GM12878 (cell line): ENCODE measurements at regions of chr7 and their contacts with region 1.

Region 1: DNA sequence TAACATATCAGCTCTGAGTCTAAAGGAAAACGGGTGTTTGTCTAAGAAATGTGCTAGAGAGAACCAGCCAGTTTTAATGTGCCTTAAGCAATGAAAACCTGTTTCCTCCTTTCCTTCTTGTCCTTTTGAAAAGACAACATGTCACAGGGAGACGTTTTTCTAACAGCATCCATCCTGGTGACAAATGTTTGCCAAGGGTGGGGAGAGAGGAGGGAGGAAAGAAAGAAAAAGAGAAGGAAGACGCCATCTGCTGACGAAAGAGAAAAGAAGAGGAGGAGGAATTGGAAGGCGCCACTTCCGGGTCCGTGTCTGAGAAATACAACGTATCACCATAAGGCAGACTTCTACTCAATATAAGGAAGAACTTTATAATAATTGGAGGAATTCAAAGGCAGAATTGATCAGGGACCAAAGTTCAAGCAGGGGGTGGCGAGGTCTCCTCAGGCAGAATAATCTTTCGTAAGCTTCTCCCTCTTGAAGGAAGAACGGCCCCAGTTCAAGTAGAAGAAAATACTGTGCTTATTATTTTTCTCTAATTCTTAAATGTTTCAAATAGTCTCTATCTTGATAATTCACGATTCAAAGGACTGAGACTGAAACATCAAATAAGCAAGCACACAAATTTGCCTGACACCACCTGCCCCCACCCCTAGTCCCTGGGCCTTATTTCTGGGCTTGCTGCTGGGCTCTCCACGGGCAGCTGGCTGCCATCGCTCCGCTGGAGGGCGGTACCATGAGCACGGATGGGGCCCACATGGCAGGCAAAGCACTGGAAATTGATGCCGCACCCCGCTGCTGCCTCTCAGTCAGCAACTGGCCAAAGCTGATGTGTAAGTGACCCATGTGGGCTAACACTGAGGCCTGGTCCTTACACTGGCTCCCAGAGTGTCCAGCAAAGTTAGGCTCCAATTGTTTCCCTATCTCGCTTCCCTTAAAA is 273.7 kb upstream of the KLF14 start:
- DNase-seq: peak; percentile 63
- ATAC-seq: peak; percentile 64
- H3K4me3 ChIP-seq: peak overlapping the region; percentile 22; the same call in 1 of the 2 replicates
- H3K27ac ChIP-seq: peak overlapping the region; percentile 89
- H3K4me1 ChIP-seq: peaks cover 48% of the 10 kb centered on the region
- H3K27me3 ChIP-seq: no peaks in the 10 kb centered on the region
- CTCF ChIP-seq: peak; percentile 46 to 66 (median 54)
- EP300 ChIP-seq: no peak
- POLR2A ChIP-seq: peak; percentile 64
- RAD21 ChIP-seq: peak; percentile 80

Region 2: GRCh38 chr7:130641497-130641896 is 366.2 kb before region 1 on chr7:
- CTCF ChIA-PET with region 1: no interaction called
- POLR2A ChIA-PET with region 1: no interaction called
- RAD21 ChIA-PET with region 1: no interaction called
- SMC1A ChIA-PET with region 1: no interaction called
- in situ Hi-C with region 1: no loop called
- intact Hi-C with region 1: no loop called
- DNase-seq: no peak
- ATAC-seq: no peak
- H3K4me3 ChIP-seq: no peak overlapping the region
- H3K27ac ChIP-seq: no peak overlapping the region
- H3K4me1 ChIP-seq: no peaks in the 10 kb centered on the region
- H3K27me3 ChIP-seq: no peaks in the 10 kb centered on the region
- CTCF ChIP-seq: no peak
- EP300 ChIP-seq: no peak
- POLR2A ChIP-seq: no peak
- RAD21 ChIP-seq: no peak

Region 3: GRCh38 chr7:130996841-130997231 is 10.8 kb before region 1 on chr7:
- CTCF ChIA-PET with region 1: interaction called, 26 read pairs
- POLR2A ChIA-PET with region 1: interaction called, 5 read pairs
- RAD21 ChIA-PET with region 1: interaction called, 9 read pairs
- SMC1A ChIA-PET with region 1: interaction called, 11 read pairs
- in situ Hi-C with region 1: no loop called
- intact Hi-C with region 1: no loop called
- DNase-seq: no peak
- ATAC-seq: peak; percentile 45
- H3K4me3 ChIP-seq: no peak overlapping the region
- H3K27ac ChIP-seq: no peak overlapping the region
- H3K4me1 ChIP-seq: peaks cover 18% of the 10 kb centered on the region
- H3K27me3 ChIP-seq: no peaks in the 10 kb centered on the region
- CTCF ChIP-seq: no peak
- EP300 ChIP-seq: no peak
- POLR2A ChIP-seq: no peak; the same call in 1 of the 2 replicates
- RAD21 ChIP-seq: no peak

Region 4: DNA sequence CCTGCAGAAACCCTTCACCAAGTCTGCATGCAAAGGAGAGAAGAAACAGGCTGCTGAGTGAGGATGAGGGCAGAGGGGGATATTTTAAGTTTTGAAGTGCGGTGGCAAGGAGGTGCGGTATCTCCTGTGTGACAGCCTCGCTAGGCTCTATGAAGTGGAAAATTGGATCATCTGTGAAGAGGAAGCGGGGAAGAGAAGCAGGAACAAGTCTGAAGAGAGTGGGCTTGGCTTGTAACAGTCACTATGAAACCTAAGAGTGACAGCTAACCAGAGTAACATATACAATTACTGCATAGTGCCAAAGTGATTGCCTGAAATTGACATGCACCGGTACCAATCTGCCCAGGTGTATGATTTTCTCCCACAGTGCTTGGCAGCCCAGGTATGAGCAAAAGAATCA is 13.8 kb after region 1 on chr7:
- CTCF ChIA-PET with region 1: interaction called, 44 read pairs
- POLR2A ChIA-PET with region 1: interaction called, 6 read pairs
- RAD21 ChIA-PET with region 1: interaction called, 8 read pairs
- SMC1A ChIA-PET with region 1: interaction called, 18 read pairs
- in situ Hi-C with region 1: no loop called
- intact Hi-C with region 1: no loop called
- DNase-seq: no peak
- ATAC-seq: peak; percentile 78
- H3K4me3 ChIP-seq: peak overlapping the region; percentile 33
- H3K27ac ChIP-seq: peak overlapping the region; percentile 80
- H3K4me1 ChIP-seq: peaks cover 40% of the 10 kb centered on the region
- H3K27me3 ChIP-seq: no peaks in the 10 kb centered on the region
- CTCF ChIP-seq: no peak
- EP300 ChIP-seq: peak in 1 of 2 experiments; percentile 17; a peak in 1 of 4 replicates
- POLR2A ChIP-seq: no peak; the same call in 1 of the 2 replicates
- RAD21 ChIP-seq: no peak

Region 5: GRCh38 chr7:131027287-131027773 is 19.7 kb after region 1 on chr7:
- CTCF ChIA-PET with region 1: interaction called, 44 read pairs
- POLR2A ChIA-PET with region 1: interaction called, 6 read pairs
- RAD21 ChIA-PET with region 1: interaction called, 8 read pairs
- SMC1A ChIA-PET with region 1: interaction called, 18 read pairs
- in situ Hi-C with region 1: no loop called
- intact Hi-C with region 1: loop called (anchors 2 kb)
- DNase-seq: no peak
- ATAC-seq: peak; percentile 46
- H3K4me3 ChIP-seq: no peak overlapping the region
- H3K27ac ChIP-seq: peak overlapping the region; percentile 61
- H3K4me1 ChIP-seq: peaks cover 53% of the 10 kb centered on the region
- H3K27me3 ChIP-seq: no peaks in the 10 kb centered on the region
- CTCF ChIP-seq: no peak
- EP300 ChIP-seq: no peak
- POLR2A ChIP-seq: peak; percentile 38; the same call in 1 of the 2 replicates
- RAD21 ChIP-seq: 0 out of 2 replicates have a peak, but pooled peaks have one; percentile 22

Region 6: DNA sequence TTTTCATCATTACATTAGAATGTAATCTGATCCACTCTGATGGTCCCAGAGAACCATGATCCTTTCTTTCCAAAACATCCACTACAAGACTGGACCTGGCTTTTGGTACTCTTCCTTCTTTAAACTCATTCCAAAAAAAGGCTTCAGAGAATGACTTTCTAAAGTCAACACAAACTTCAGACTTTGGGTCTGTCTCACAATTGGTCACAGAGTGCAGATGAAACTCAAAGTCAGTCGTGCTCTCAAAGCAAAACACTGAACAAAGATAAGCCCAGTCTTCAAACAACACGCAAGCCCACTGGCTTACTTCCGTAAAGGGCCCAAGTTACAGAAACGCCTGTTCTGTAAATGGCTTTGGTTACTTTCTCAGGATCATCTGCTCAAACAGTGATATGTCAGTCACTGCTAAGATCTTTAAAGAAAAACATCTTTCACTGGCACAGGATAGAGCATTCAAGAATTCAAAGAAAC is 69.1 kb after region 1 on chr7:
- CTCF ChIA-PET with region 1: no interaction called
- POLR2A ChIA-PET with region 1: no interaction called
- RAD21 ChIA-PET with region 1: no interaction called
- SMC1A ChIA-PET with region 1: no interaction called
- in situ Hi-C with region 1: no loop called
- intact Hi-C with region 1: no loop called
- DNase-seq: no peak
- ATAC-seq: no peak
- H3K4me3 ChIP-seq: no peak overlapping the region
- H3K27ac ChIP-seq: no peak overlapping the region
- H3K4me1 ChIP-seq: no peaks in the 10 kb centered on the region
- H3K27me3 ChIP-seq: no peaks in the 10 kb centered on the region
- CTCF ChIP-seq: no peak
- EP300 ChIP-seq: no peak
- POLR2A ChIP-seq: no peak
- RAD21 ChIP-seq: no peak